Psoas muscle (tissue), 8 donors: ENCODE measurements at regions of chr12 and their contacts with region 1.

Region 1: DNA sequence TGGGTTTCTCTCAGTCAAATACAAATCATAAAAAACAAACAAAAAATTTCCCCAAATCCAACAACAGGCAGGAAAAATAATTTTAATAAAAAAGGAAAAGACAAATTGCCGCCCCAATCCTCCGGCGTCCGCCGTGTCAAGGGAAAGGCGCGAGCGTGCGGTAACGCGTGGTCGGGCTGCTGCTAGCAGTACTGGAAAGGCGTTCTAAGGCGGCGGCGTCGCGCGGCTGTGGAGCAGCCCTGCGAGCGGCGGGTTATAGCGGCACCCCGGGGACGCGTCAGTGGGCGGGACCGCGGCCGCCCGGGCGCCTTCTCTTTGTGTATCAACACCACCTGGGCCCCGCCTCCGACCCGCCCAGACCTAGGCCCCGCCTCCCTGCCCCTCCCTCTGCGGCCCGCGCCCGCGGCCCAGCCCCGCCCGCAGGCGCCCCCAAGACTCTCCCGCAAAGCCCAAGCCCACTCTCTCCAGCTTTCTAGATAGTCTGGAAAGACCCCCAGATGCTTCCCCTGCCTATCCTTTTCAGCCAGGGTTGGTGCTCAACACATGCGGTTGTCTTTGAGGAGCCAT is at the start of gene SLC38A2:
- DNase-seq: peak; percentile 97 to 99
- ATAC-seq: peak; percentile 88 to 93 (median 90)
- H3K4me3 ChIP-seq: peak within 1 kb of the TSS; percentile 94
- H3K27ac ChIP-seq: peak within 1 kb of the TSS; percentile 99
- H3K4me1 ChIP-seq: peaks cover 40% of the 10 kb centered on the region
- H3K27me3 ChIP-seq: no peaks in the 10 kb centered on the region
- CTCF ChIP-seq: no peak
- total RNA-seq, gene SLC38A2: 287 to 428 (median 331) TPM

Region 2: DNA sequence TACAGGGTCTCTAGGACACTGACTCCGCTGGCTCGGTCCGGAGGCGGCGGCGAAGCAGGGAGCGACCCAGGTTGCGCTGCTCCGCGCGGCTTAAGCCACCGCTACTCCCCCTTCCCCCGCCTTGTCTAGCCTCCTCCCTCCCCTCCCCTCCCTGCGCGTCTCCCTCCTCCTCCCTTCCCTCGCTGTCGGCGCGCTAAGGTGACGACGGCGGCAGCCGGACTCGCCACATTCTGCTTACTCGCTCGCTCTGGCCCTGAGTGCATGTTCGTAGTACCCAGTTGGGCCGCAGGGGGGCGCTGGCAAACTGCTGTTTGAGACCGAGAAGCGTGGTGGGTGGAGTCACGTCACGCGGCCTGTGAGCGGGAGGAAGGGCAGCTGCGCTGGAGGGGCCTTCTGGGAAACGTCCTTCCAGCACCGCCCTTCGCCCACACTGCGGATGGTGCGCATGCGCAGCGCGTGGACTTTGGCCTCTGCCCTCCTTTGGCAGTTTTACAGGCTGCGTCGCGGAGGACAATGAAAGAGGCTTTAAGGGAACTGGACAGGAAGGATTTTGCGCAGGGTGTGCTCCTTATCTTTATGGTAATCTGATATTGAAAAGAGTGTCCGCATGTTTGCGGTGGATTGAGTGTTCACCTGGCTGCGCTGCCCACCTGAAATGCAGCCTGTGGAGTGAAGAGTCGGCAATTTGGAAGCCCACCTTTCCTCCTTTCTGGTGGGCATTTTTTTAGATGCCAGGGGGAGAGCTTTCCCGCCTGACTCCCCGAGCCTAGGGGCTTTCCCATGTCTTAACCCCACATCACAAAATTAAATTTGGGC is 382.0 kb before region 1 on chr12 and contains the start of gene SCAF11:
- intact Hi-C with region 1: loop called in 1 of 2 experiments (anchors 5 kb)
- DNase-seq: peak; percentile 100
- ATAC-seq: peak; percentile 86 to 92 (median 90)
- H3K4me3 ChIP-seq: peak within 1 kb of the TSS; percentile 87
- H3K27ac ChIP-seq: peak within 1 kb of the TSS; percentile 99
- H3K4me1 ChIP-seq: peaks cover 34% of the 10 kb centered on the region
- H3K27me3 ChIP-seq: no peaks in the 10 kb centered on the region
- CTCF ChIP-seq: peak; percentile 91
- total RNA-seq, gene SCAF11: 63.5 to 90.0 (median 75.9) TPM

Region 3: DNA sequence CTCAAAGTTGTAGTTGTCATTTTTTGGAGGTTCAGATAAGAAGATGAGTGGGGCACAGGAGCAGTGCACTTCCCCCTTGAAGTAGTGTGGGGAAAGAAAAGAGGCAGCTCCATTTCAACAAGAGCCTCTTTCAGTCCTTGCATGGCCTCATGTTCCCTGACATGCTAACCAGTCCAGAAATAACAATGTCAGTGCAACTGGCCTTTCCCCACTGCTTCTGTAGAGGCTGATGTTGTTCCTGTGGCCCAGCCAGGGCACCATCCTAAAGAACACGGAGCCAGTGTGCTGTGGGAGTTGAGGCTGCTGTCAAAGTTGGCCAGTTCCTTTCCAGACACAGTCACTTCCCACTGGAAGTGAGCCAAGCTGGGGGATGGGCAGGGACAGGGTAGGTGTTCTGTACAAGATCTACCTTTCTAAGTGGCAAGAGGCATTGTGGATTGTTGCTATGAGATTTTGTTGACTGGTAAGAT is 77.7 kb after region 1 on chr12:
- intact Hi-C with region 1: loop called in 1 of 2 experiments (anchors 5 kb)
- DNase-seq: peak; percentile 58 to 86
- ATAC-seq: peak; percentile 55 to 91 (median 82)
- H3K4me3 ChIP-seq: no peak overlapping the region
- H3K27ac ChIP-seq: peak overlapping the region; percentile 74
- H3K4me1 ChIP-seq: peaks cover 57% of the 10 kb centered on the region
- H3K27me3 ChIP-seq: no peaks in the 10 kb centered on the region
- CTCF ChIP-seq: no peak

Region 4: DNA sequence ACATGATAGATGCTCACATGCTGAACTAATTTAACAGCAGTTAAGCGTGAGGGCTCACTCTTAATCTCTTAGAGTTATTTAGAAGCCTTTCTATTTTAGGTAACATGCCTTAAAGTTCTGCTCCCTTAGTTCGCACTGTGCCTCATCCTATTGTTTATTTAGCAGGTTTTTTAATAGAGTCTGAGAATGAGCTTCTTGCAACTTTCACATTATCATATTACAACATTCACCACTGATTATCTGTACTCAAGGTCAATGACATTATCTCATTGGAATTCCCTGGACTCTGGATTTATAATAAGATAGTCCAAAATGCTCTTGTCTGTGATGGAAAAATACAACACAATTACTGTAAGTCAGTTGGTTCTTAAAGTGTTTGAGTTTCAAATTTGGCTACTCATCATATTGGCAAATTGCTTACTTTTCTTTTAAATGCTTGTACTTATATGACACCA is 183.5 kb after region 1 on chr12:
- intact Hi-C with region 1: loop called (anchors 5 kb)
- DNase-seq: no peak
- ATAC-seq: peak; percentile 63 to 88 (median 80)
- H3K4me3 ChIP-seq: no peak overlapping the region
- H3K27ac ChIP-seq: peak overlapping the region; percentile 77
- H3K4me1 ChIP-seq: peaks cover 52% of the 10 kb centered on the region
- H3K27me3 ChIP-seq: no peaks in the 10 kb centered on the region
- CTCF ChIP-seq: no peak